H1 (cell line): ENCODE measurements at regions of chr7 and their contacts with region 1.

Region 1: DNA sequence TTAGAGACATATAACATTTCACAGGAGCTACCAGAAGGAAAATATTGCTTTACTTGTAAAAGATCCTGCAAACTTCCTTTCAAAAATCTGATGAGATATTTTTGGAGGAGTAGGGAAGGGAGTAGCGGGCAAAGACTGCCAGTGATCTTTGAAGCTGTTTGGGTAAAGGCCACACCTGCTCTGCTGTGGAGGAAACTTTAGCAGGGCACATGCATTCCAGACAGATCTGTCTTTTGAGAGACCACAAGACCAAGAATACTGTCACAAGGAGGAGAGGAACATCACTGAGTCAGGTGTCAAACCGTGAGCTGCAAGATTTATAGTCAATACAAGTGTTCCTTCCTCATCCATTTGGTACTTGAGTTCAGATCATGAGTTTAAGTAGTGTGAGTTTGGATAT is 654.4 kb downstream of the DNAJB9 start:
- DNase-seq: no peak
- H3K4me3 ChIP-seq: no peak overlapping the region
- H3K27ac ChIP-seq: no peak overlapping the region
- H3K4me1 ChIP-seq: peaks cover 0 to 2% (median 0%) of the 10 kb centered on the region in 4 experiments; a peak in 1 of 7 replicates
- H3K27me3 ChIP-seq: peaks cover 0 to 1% (median 0%) of the 10 kb centered on the region in 4 experiments; a peak in 1 of 7 replicates
- CTCF ChIP-seq: no peak
- EP300 ChIP-seq: no peak
- POLR2A ChIP-seq: no peak
- RAD21 ChIP-seq: no peak

Region 2: DNA sequence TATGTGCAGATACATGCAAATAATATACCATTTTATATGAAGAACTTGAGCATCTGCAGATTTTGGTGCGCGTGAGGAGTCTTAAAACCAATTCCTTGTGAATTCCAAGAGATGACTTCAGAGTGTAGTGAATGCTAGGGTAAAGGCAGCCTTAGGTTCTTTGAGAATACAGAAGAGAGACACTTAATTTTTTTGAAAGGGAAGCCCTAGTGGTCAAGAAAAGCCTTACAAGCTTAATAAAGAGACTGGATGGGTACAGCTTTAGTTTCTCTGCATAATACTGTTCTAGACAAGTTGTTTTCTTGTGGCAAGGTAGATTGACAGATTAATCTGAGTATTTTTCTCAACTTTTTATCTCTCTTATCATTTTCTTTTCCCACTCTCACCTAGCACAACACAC is 17.9 kb before region 1 on chr7:
- CTCF ChIA-PET with region 1: interaction called, 13 read pairs
- POLR2A ChIA-PET with region 1: no interaction called
- DNase-seq: no peak
- H3K4me3 ChIP-seq: no peak overlapping the region
- H3K27ac ChIP-seq: no peak overlapping the region
- H3K4me1 ChIP-seq: no peaks in the 10 kb centered on the region
- H3K27me3 ChIP-seq: no peaks in the 10 kb centered on the region
- CTCF ChIP-seq: peak in 1 of 3 experiments; percentile 22; a peak in 1 of 4 replicates
- EP300 ChIP-seq: no peak
- POLR2A ChIP-seq: no peak
- RAD21 ChIP-seq: no peak

Region 3: GRCh38 chr7:109246330-109247077 is 22.4 kb after region 1 on chr7:
- CTCF ChIA-PET with region 1: no interaction called
- POLR2A ChIA-PET with region 1: no interaction called
- DNase-seq: no peak
- H3K4me3 ChIP-seq: no peak overlapping the region
- H3K27ac ChIP-seq: no peak overlapping the region
- H3K4me1 ChIP-seq: no peaks in the 10 kb centered on the region
- H3K27me3 ChIP-seq: no peaks in the 10 kb centered on the region
- CTCF ChIP-seq: no peak
- EP300 ChIP-seq: no peak
- POLR2A ChIP-seq: no peak
- RAD21 ChIP-seq: no peak